ENCODE measurements at regions of chr1 and their contacts with region 1.

Region 1: DNA sequence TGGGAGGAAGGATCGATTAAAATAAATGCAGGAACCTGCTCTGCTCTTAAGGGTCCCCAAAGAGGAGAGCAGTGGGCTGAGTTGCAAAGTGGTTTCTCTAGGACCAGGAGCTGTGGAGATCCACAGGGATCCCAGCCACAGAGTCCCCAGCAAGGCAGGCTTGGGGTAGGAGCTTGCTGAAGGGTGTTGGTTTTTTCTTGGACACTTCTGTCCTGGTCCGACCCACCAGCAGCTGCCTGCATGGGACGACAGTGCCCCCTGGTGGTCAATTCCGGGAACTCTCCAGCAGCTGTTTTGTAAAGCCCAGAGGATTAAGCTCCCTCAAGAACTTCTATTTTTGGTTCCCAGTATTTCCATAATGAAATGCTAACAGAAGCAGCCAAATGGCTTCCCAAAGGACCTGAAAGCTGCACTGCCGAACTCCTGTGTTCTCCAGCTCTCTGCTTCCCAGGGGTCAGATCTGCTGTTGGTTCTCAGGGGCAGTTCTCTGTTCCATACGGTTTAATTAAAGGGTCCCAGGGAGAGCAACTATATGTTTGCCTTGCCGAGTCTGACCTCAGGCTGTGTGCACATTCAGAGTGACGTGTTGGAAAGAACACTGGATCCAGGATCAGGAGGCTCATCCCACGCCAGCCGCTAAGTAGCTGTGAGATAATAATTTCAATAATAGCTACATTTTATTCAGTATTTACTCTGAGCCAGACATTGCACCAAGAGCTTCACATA is 23.2 kb downstream of the NENF start:
- DNase-seq: peak; percentile 82 to 96 (median 89)
- H3K4me3 ChIP-seq: no peak overlapping the region
- H3K27ac ChIP-seq: no peak overlapping the region
- H3K4me1 ChIP-seq: no peaks in the 10 kb centered on the region
- H3K27me3 ChIP-seq: no peaks in the 10 kb centered on the region
- CTCF ChIP-seq: peak; percentile 92 to 100 (median 96)
- POLR2A ChIP-seq: no peak

Region 2: DNA sequence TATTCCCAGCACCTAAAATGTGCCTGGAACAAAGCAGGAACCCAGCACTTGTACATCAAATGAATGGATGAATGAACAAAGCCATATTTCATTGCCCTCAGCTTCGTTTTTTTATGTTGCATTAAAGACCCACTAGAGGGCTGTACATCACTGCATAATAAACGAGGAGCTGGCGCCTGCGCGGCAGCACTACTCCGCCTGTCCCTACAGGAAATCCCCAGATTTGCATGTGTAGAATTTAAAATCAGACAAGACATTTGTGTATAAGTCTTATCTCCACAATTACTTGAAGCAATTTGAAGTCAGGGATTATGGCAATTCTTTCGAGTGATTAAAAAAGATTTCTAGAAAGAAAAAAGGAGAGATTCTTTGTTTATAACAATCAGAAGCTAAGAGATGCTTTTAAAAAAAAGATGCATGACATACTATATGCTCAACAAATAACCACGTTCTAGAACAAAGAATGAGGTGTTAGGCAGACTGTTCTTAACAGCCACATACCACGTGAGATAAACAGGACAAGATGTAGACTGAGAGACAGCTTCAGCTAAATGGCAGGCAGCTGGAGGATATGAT is 775.1 kb before region 1 on chr1:
- intact Hi-C with region 1: loop called in 1 of 2 experiments (anchors 10 kb)
- DNase-seq: peak; percentile 60 to 86 (median 74)
- H3K4me3 ChIP-seq: no peak overlapping the region
- H3K27ac ChIP-seq: no peak overlapping the region
- H3K4me1 ChIP-seq: peaks cover 0 to 3% of the 10 kb centered on the region in 2 donors
- H3K27me3 ChIP-seq: no peaks in the 10 kb centered on the region
- CTCF ChIP-seq: peak; percentile 75 to 95 (median 89)
- POLR2A ChIP-seq: no peak

Region 3: DNA sequence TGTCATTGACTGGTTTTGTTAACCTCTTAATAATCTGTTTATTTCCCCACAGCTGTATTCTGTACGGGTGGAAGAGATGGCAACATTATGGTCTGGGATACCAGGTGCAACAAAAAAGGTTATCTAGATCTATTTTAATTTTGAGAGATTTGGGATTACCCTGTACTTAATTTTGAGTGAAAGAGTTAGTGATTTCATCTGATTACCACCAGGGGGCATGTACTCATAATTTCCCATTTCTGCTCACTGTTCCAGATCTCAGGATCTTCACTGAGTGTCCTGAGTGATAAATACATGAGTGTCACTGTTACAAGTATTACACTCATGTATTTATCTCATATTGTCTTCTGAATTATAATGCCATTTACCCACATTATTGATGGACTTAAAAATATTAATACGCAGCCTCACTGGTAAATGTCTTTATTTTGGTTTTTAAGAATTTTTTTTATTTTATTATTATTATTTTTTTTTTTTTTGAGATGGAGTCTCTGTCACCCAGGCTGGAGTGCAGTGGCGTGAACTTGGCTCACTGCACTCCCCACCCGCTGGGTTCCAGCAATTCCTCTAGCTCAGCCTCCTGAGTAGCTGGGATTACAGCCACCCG is 393.0 kb before region 1 on chr1:
- intact Hi-C with region 1: loop called (anchors 5 kb)
- DNase-seq: no peak
- H3K4me3 ChIP-seq: no peak overlapping the region
- H3K27ac ChIP-seq: no peak overlapping the region
- H3K4me1 ChIP-seq: no peaks in the 10 kb centered on the region
- H3K27me3 ChIP-seq: no peaks in the 10 kb centered on the region
- CTCF ChIP-seq: peak; percentile 58 to 75 (median 65)
- POLR2A ChIP-seq: no peak

Region 4: DNA sequence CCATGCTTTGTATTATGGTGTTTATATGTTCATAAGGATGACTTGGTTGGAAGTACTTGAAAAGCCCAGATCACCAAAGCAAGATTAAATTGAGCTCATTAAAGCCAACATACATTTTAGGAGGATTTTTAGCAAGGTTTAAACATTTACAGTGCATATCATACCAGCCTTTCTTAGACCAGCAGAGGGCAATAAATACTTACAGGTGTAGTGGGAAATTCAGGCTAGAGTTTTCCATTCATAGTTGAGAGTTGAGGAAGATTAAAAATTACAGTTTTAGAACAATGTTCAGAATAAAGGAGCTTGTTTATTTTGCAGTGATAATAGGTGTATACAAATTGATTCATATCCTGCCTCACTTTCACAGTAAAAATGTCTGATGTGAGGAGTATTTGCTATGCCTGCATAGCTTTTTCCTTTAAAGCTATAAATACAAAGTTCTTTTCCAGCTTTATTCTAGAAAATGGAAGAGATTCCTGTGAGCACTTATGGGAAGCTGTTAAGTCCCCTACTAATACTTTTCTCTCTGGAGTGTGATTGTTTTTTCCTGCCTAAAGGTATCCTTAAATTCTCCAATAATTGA is 385.2 kb before region 1 on chr1:
- intact Hi-C with region 1: loop called in 1 of 2 experiments (anchors 5 kb)
- DNase-seq: no peak
- H3K4me3 ChIP-seq: no peak overlapping the region
- H3K27ac ChIP-seq: no peak overlapping the region
- H3K4me1 ChIP-seq: no peaks in the 10 kb centered on the region
- H3K27me3 ChIP-seq: no peaks in the 10 kb centered on the region
- CTCF ChIP-seq: peak; percentile 58 to 92 (median 78)
- POLR2A ChIP-seq: no peak

Region 5: DNA sequence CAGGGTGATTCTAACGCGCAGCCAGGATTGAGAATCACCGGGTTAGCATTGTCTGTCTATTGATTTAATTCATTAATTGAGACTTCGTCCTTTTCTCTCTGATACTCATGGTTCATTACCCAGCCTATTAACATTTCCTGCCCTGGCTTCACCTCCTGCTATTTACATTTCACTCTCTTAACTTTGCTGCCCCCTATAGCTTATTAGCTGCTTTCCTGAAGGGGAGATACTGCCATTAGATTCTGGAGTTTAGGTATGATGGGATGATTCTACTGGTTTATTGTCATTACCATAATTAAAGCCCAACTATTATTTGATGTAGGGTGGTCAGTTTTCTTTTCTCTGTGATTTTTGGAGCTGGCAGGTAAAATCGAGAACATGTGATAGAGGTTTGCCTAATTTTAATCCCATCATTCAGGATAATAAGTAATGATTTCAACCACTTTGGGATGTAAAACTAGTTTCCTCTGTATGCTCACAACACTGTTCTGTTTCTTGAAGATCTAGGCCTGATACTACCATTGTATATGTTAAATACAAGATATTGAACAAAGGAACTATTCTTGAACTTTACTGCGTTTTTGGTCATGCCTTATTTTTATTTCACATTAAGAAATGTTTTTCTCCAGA is 164.3 kb before region 1 on chr1:
- intact Hi-C with region 1: loop called in 1 of 2 experiments (anchors 10 kb)
- DNase-seq: peak in 1 of 7 donors; percentile 10
- H3K4me3 ChIP-seq: no peak overlapping the region
- H3K27ac ChIP-seq: no peak overlapping the region
- H3K4me1 ChIP-seq: peaks cover 8 to 42% of the 10 kb centered on the region in 2 donors
- H3K27me3 ChIP-seq: no peaks in the 10 kb centered on the region
- CTCF ChIP-seq: peak in 4 of 6 experiments; percentile 41 to 52 (median 46)
- POLR2A ChIP-seq: no peak

Region 6: DNA sequence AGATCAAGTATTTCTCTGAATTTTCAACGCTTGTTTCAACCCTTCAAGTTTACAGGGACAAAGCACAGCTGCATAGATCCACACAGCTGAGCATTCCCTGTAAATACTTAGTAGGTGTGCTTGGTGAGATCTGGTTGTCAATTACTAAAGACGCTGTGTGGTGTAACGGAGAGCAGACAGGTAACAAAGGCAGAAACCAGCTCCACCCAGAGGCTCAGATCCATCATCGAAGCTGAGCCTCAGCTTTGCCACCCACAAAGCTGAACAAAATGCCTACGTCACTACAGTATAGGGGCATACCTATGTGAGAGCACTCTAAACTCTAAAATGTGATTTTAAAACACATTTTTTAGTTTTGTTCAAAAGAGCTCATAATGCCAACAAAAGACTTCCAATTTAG is 80.0 kb before region 1 on chr1:
- intact Hi-C with region 1: loop called in 1 of 2 experiments (anchors 5 kb)
- DNase-seq: no peak
- H3K4me3 ChIP-seq: no peak overlapping the region
- H3K27ac ChIP-seq: no peak overlapping the region
- H3K4me1 ChIP-seq: no peaks in the 10 kb centered on the region
- H3K27me3 ChIP-seq: no peaks in the 10 kb centered on the region
- CTCF ChIP-seq: no peak
- POLR2A ChIP-seq: no peak

Region 7: GRCh38 chr1:212586206-212587015 is 130.4 kb after region 1 on chr1:
- intact Hi-C with region 1: no loop called
- DNase-seq: no peak
- H3K4me3 ChIP-seq: no peak overlapping the region
- H3K27ac ChIP-seq: no peak overlapping the region
- H3K4me1 ChIP-seq: no peaks in the 10 kb centered on the region
- H3K27me3 ChIP-seq: peaks cover 24% of the 10 kb centered on the region
- CTCF ChIP-seq: no peak
- POLR2A ChIP-seq: no peak

Region 8: GRCh38 chr1:212635141-212635631 is 179.2 kb after region 1 on chr1:
- intact Hi-C with region 1: no loop called
- DNase-seq: no peak
- H3K4me3 ChIP-seq: no peak overlapping the region
- H3K27ac ChIP-seq: peak overlapping the region in 2 of 5 donors; percentile 79 to 90
- H3K4me1 ChIP-seq: peaks cover 10 to 13% of the 10 kb centered on the region in 2 donors
- H3K27me3 ChIP-seq: no peaks in the 10 kb centered on the region
- CTCF ChIP-seq: no peak
- POLR2A ChIP-seq: no peak

Measured in adrenal gland (tissue), 19 donors.